ENCODE measurements at regions of chr3 and their contacts with region 1.

Region 1: DNA sequence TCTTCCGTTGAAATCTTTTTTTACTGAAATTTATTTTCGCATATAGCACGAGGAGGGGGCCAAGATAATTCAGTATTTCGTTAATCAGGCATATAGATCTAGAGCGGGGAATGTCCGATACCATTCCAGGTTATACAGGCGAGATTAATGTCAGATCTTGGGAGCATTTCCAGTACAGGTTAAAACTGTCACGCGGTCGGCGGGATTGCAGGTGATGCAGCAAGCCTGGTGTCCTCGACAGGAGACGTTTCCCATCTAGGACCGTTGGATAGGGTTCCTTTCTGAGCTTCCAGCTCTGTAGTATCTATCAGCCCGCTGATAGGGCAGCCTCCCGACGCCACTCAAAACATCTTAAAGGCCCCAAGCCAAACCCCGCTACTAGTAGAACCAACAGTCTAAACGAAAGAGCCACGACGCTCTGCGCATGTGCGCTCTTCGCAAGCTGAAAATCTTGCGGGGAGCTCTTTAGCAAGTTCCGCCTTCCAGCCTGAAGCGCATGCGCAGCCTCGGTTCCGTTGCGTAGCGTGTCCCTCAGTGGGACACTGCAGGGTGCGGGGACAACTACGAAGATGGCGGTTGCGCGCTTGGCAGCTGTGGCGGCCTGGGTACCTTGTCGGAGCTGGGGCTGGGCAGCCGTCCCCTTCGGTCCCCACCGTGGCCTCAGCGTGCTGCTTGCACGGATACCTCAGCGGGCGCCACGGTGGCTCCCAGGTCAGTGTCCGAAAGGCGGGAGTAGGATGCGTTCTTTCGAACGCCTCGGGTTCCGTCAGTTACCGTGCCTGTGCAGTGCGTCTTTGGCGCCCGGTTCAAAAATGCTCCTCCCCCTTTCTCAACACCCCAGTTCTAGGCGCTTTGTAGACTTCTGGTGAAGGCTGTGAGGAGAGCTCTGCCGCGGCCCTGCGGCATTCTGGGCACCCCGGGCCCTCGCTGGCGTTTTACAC is at the start of gene ABHD10:
- DNase-seq: peak; percentile 93 to 99 (median 97)
- ATAC-seq: peak; percentile 93
- H3K4me3 ChIP-seq: peak within 1 kb of the TSS; percentile 75
- H3K4me3 Mint-ChIP-seq: peak within 1 kb of the TSS; percentile 95
- H3K27ac ChIP-seq: peak within 1 kb of the TSS; percentile 56 to 74
- H3K27ac Mint-ChIP-seq: peak within 1 kb of the TSS; percentile 94
- H3K4me1 ChIP-seq: peaks cover 11% of the 10 kb centered on the region
- H3K4me1 Mint-ChIP-seq: peaks cover 48% of the 10 kb centered on the region
- H3K27me3 ChIP-seq: no peaks in the 10 kb centered on the region
- H3K27me3 Mint-ChIP-seq: no peaks in the 10 kb centered on the region
- CTCF ChIP-seq: no peak
- total RNA-seq, gene ABHD10: 28.2 to 32.5 TPM

Region 2: DNA sequence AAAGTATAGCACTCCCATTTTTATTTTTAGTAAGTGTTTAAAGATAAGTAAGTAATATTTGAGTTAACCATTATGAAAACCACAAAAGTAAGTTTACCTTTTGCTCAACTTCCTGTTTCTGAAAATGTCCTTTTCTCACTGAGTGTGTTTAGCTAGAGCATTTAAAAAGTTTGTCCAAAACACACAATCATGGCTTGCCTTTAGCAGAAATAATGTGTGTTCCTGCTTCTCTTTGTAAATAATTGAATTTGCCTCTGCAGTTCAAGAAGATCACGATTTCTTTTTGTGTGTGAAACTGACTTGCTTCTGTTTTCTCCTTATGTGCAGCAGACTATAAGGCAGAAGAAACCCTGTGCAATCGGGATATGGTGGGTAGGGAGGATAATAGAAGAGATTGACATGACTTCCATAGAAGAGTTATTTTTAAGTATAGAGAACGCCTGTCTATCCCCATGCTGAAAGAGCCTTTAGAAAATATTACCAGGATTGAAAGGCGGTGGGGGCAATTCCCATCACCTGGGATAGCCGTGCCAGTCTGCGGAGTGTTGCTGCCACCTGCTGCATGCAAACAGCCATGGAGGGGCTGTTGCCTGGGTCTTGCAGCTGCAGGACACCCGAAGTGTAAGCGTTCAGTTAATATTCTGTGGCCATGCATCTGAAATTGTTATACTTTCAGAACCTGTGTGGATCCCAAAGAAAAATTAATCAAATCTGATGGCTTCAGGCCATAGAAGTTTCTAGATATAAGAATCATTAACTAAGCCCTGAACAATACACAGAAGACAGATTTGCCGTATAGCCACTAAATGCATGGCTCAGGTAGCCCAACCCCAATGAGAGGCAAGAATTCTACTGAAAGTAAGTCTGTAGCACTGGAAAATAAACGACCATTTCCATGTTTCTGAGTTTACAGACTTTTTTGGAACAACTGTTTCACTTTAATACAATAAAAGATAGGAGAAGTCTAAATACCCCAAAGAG is 439.1 kb before region 1 on chr3:
- CTCF ChIA-PET with region 1: no interaction called
- POLR2A ChIA-PET with region 1: interaction called, 6 read pairs
- intact Hi-C with region 1: loop called in 1 of 2 experiments (anchors 5 kb)
- DNase-seq: peak; percentile 37 to 82 (median 64)
- ATAC-seq: peak; percentile 26
- H3K4me3 ChIP-seq: peak overlapping the region; percentile 37
- H3K4me3 Mint-ChIP-seq: peak overlapping the region; percentile 64
- H3K27ac ChIP-seq: peak overlapping the region in 1 of 2 donors; percentile 10
- H3K27ac Mint-ChIP-seq: no peak overlapping the region
- H3K4me1 ChIP-seq: peaks cover 31% of the 10 kb centered on the region
- H3K4me1 Mint-ChIP-seq: peaks cover 46% of the 10 kb centered on the region
- H3K27me3 ChIP-seq: no peaks in the 10 kb centered on the region
- H3K27me3 Mint-ChIP-seq: no peaks in the 10 kb centered on the region
- CTCF ChIP-seq: peak; percentile 96

Region 3: GRCh38 chr3:111668912-111669488 is 309.8 kb before region 1 on chr3:
- CTCF ChIA-PET with region 1: interaction called, 3 read pairs
- POLR2A ChIA-PET with region 1: interaction called, 28 read pairs
- intact Hi-C with region 1: loop called in 1 of 2 experiments (anchors 2 kb)
- DNase-seq: peak in 3 of 14 experiments; percentile 68 to 73 (median 70)
- ATAC-seq: peak; percentile 44
- H3K4me3 ChIP-seq: no peak overlapping the region
- H3K4me3 Mint-ChIP-seq: peak overlapping the region; percentile 73
- H3K27ac ChIP-seq: peak overlapping the region in 1 of 2 donors; percentile 3
- H3K27ac Mint-ChIP-seq: peak overlapping the region; percentile 73
- H3K4me1 ChIP-seq: peaks cover 53% of the 10 kb centered on the region
- H3K4me1 Mint-ChIP-seq: peaks cover 68% of the 10 kb centered on the region
- H3K27me3 ChIP-seq: no peaks in the 10 kb centered on the region
- H3K27me3 Mint-ChIP-seq: no peaks in the 10 kb centered on the region
- CTCF ChIP-seq: peak; percentile 87

Region 4: DNA sequence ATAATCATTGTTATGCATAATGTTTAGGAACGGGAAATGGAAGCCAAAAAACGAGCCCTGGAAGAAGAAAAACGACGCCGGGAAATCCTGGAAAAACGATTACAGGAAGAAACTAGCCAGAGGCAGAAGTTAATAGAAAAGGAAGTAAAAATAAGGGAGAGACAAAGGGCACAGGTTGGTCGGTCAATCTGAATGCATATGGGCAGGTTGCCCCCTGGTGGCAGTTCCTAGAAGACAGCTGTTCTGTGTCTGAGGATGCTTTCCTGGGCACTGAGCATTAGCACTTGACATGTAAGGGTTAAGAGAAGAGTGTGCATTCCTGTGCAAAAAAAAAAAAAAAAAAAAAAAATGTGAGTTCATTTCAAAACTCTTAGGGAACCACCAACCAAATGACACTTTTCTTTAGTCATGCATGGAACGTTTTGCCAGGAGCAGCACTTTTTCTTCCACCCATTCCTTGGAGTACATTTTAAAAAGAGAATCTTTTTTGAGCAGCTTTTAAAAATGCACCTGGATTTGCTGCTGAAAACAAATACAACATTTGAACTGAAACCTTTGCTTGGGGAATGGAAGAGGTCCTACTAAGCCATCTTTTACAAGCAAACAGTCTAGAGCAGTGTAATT is 11.0 kb before region 1 on chr3:
- CTCF ChIA-PET with region 1: interaction called, 16 read pairs
- POLR2A ChIA-PET with region 1: interaction called, 32 read pairs
- intact Hi-C with region 1: no loop called
- DNase-seq: peak; percentile 62 to 88 (median 72)
- ATAC-seq: peak; percentile 97
- H3K4me3 ChIP-seq: no peak overlapping the region
- H3K4me3 Mint-ChIP-seq: no peak overlapping the region
- H3K27ac ChIP-seq: no peak overlapping the region
- H3K27ac Mint-ChIP-seq: no peak overlapping the region
- H3K4me1 ChIP-seq: no peaks in the 10 kb centered on the region
- H3K4me1 Mint-ChIP-seq: peaks cover 5% of the 10 kb centered on the region
- H3K27me3 ChIP-seq: no peaks in the 10 kb centered on the region
- H3K27me3 Mint-ChIP-seq: no peaks in the 10 kb centered on the region
- CTCF ChIP-seq: peak; percentile 96

Region 5: GRCh38 chr3:111998636-111999483 is 20.1 kb after region 1 on chr3 and contains the start of gene TAGLN3:
- CTCF ChIA-PET with region 1: no interaction called
- POLR2A ChIA-PET with region 1: interaction called, 19 read pairs
- intact Hi-C with region 1: no loop called
- DNase-seq: peak in 1 of 14 experiments; percentile 14
- ATAC-seq: peak; percentile 72
- H3K4me3 ChIP-seq: peak within 1 kb of the TSS; percentile 42
- H3K4me3 Mint-ChIP-seq: peak within 1 kb of the TSS; percentile 88
- H3K27ac ChIP-seq: no peak within 1 kb of the TSS
- H3K27ac Mint-ChIP-seq: no peak within 1 kb of the TSS
- H3K4me1 ChIP-seq: peaks cover 29% of the 10 kb centered on the region
- H3K4me1 Mint-ChIP-seq: peaks cover 42% of the 10 kb centered on the region
- H3K27me3 ChIP-seq: peaks cover 0 to 3% of the 10 kb centered on the region in 2 experiments
- H3K27me3 Mint-ChIP-seq: no peaks in the 10 kb centered on the region
- CTCF ChIP-seq: no peak
- total RNA-seq, gene TAGLN3: 0.28 TPM in 1 of 2 experiments, not detected in the other

Region 6: DNA sequence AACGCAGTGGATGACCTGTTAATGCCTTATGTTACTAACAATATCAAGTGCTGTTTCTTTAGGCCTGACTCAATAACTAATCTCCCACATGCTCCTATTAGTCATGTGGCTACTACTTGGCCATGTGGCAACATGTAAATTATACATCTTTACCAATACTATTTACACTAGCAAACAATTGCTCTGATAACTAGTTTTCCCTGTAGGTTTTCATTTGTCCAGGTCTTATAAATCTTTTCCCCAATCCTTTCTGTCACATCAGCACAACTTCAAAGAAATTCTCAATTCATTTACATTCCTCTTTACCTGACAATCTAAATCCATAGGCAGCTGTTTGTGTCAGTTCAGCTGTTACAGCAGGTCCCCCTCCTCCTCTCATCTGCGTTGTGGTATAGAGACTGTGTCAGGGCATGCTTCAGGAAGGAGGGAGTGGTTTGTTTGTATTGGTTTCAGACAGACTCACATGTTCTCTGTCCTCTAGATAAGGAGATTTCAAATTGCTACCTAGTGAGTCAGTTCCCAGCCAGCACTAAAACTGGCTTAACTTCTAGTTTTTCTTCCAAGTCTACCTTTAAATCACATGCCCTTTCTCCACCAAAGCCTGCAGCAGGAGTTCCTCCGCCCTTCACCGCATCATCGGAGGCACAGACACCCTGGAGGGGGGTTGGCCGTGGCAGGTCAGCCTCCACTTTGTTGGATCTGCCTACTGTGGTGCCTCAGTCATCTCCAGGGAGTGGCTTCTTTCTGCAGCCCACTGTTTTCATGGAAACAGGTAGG is 96.1 kb after region 1 on chr3:
- CTCF ChIA-PET with region 1: no interaction called
- POLR2A ChIA-PET with region 1: interaction called, 12 read pairs
- intact Hi-C with region 1: loop called in 1 of 2 experiments (anchors 5 kb)
- DNase-seq: peak in 12 of 14 experiments; percentile 5 to 77 (median 42)
- ATAC-seq: peak; percentile 86
- H3K4me3 ChIP-seq: no peak overlapping the region
- H3K4me3 Mint-ChIP-seq: peak overlapping the region; percentile 70
- H3K27ac ChIP-seq: peak overlapping the region in 1 of 2 donors; percentile 48
- H3K27ac Mint-ChIP-seq: peak overlapping the region; percentile 94
- H3K4me1 ChIP-seq: peaks cover 21% of the 10 kb centered on the region
- H3K4me1 Mint-ChIP-seq: peaks cover 56% of the 10 kb centered on the region
- H3K27me3 ChIP-seq: no peaks in the 10 kb centered on the region
- H3K27me3 Mint-ChIP-seq: no peaks in the 10 kb centered on the region
- CTCF ChIP-seq: no peak

Measured in CD4-positive, alpha-beta T cell (primary cell).